Ascending aorta (tissue), 2 donors: ENCODE measurements at regions of chr1 and their contacts with region 1.

Region 1: GRCh38 chr1:44609412-44609767 is 64.9 kb downstream of the TMEM53 start:
- DNase-seq: peak in 1 of 2 donors; percentile 68
- H3K4me3 ChIP-seq: no peak overlapping the region
- H3K27ac ChIP-seq: no peak overlapping the region
- H3K4me1 ChIP-seq: no peaks in the 10 kb centered on the region
- H3K27me3 ChIP-seq: no peaks in the 10 kb centered on the region
- CTCF ChIP-seq: peak; percentile 50 to 63 (median 52)

Region 2: DNA sequence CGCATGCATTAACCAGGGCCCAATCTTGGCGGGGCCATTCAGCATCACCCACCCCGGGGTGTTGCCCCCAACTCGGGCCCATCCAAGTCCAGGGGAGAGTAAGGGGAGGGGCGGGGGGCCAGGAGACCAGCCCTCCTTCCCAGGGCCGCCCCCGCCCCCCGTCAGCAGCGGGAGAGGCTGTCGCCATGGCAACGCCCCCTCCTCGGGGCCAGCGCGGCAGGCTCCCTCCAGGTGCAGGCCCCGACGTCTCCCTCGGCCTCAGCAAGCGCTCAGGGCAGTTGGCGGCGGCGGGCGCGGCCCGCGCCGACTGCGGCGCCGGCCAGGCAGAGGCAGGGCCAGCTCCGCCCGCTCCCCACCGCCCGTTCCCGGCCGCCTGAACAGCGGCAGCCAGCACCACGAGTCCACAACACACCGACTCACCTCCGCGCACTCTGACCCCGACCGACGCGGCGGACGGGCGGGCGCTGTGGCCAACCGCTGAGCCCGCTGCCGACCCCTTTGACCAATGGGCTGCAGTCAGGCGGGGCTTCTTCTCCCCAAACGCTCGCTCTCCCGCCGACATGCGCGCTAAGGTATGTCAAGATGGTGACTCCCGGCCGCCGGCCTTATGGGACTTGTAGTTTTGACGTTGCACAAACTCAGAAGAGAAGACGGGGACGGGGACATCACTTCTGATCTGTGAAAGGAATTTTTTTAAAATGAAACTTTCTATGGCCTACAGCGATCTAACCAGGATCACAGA is 254.4 kb before region 1 on chr1 and contains the start of gene ERI3:
- intact Hi-C with region 1: no loop called
- DNase-seq: peak; percentile 96 to 99
- H3K4me3 ChIP-seq: peak within 1 kb of the TSS; percentile 95 to 98
- H3K27ac ChIP-seq: peak within 1 kb of the TSS; percentile 68 to 90
- H3K4me1 ChIP-seq: peaks cover 8 to 14% of the 10 kb centered on the region in 2 donors
- H3K27me3 ChIP-seq: no peaks in the 10 kb centered on the region
- CTCF ChIP-seq: no peak
- total RNA-seq, gene ERI3: 69.3 TPM

Region 3: GRCh38 chr1:44652445-44653106 is 43.2 kb after region 1 on chr1:
- intact Hi-C with region 1: loop called (anchors 1 kb)
- DNase-seq: peak in 1 of 2 donors; percentile 86
- H3K4me3 ChIP-seq: no peak overlapping the region
- H3K27ac ChIP-seq: peak overlapping the region in 1 of 2 donors; percentile 42
- H3K4me1 ChIP-seq: no peaks in the 10 kb centered on the region
- H3K27me3 ChIP-seq: no peaks in the 10 kb centered on the region
- CTCF ChIP-seq: peak; percentile 91 to 97 (median 91)

Region 4: DNA sequence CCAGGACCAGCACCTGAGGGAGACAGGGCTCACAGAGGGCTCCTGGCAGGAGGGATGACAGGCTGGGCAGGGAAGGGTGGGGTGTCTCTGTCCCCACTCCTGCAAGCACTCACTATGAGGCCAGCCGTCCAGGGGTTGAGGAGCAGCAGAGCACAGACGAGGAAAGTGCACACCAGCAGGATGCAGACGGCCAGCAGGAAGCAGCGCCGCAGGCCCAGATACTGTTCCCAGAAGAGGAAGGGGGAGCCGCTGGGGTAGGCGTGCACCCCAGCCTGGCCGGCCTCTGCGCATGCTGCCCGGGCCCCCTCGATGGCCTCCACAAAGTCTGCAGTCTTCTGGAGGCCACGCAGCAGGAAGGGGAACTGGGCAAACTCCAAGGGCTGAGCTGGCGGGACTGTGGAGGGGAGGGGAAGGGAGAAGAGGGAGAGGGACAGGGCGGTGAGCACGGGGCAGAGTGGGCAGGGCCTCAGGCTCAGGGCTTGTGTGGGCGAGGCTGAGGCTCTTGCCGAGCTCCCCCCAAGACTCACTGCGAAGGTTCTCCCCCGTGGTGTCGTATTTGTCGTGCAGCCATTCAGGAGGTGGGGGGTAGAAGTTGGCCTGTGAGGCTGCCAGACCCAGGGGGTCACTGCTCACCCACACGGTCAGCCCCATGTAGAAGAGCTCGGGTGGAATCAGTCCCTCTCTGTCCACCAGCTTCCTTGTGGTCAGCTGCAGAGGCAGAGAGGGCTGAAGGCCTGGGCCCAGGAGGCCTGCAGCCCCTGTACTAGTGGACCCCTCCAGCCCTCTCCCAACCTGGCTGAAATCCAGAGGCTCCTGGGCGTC is 217.2 kb after region 1 on chr1:
- intact Hi-C with region 1: no loop called
- DNase-seq: peak in 1 of 2 donors; percentile 80
- H3K4me3 ChIP-seq: no peak overlapping the region
- H3K27ac ChIP-seq: peak overlapping the region in 1 of 2 donors; percentile 30
- H3K4me1 ChIP-seq: no peaks in the 10 kb centered on the region
- H3K27me3 ChIP-seq: no peaks in the 10 kb centered on the region
- CTCF ChIP-seq: no peak